PC-3 (cell line): ENCODE measurements at regions of chr7 and their contacts with region 1.

Region 1: DNA sequence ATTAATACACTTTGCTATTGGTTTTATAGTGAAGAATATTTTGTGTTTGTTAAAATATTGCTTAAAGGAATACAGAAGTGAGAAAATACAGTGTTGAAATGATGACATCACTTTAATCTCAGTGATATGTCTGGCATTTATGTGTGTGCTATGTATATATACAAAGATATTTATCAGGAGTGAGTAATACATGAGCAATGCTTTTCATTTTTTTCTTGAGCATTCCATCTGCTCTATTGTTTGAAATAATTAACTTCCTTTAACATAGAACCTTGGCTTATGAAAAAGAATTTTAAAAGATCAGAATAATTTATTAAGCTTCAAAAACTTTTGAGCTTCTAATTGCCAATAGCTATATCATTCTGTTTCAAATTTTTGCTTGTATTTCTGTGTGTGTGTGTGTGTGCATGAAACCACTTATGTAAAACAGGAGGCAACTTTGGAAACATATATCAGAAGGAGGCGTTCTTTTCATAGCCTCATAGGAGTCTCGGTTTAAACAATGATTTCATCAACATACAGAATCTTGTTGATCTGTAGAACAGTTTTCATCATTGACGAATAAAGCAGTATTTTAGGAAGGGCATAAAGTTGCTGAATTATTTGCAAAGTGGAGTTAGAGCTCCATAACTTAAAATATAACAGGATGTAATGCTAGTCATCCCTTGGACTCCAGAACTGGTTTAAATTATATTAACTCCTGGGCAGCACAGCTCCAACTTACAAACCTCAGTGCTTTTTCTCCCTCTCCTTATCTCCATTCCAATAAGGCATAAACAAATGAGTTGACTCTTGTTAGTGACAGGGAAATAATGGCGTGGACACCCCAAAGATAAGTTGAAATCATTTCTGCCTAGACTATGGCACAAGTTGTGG is 228.4 kb upstream of the DGKB start:
- DNase-seq: peak; percentile 80
- ATAC-seq: peak; percentile 98
- H3K4me3 ChIP-seq: no peak overlapping the region
- H3K27ac ChIP-seq: peak overlapping the region; percentile 17; the same call in 1 of the 2 replicates
- H3K4me1 ChIP-seq: peaks cover 16% of the 10 kb centered on the region
- H3K27me3 ChIP-seq: no peaks in the 10 kb centered on the region
- CTCF ChIP-seq: no peak

Region 2: GRCh38 chr7:15086131-15086611 is 44.7 kb before region 1 on chr7:
- CTCF ChIA-PET with region 1: no interaction called
- POLR2A ChIA-PET with region 1: no interaction called
- intact Hi-C with region 1: loop called (anchors 5 kb)
- DNase-seq: no peak
- ATAC-seq: no peak
- H3K4me3 ChIP-seq: no peak overlapping the region
- H3K27ac ChIP-seq: peak overlapping the region; percentile 53
- H3K4me1 ChIP-seq: peaks cover 18% of the 10 kb centered on the region
- H3K27me3 ChIP-seq: no peaks in the 10 kb centered on the region
- CTCF ChIP-seq: no peak